Left lung (tissue), 14 donors: ENCODE measurements at regions of chr1 and their contacts with region 1.

Region 1: GRCh38 chr1:162035241-162035640 is 11.6 kb upstream of the OLFML2B start:
- DNase-seq: peak in 1 of 4 donors; percentile 40
- ATAC-seq: peak; percentile 14
- H3K4me3 ChIP-seq: no peak overlapping the region
- H3K27ac ChIP-seq: no peak overlapping the region
- H3K4me1 ChIP-seq: no peaks in the 10 kb centered on the region
- H3K27me3 ChIP-seq: peaks cover 0 to 9% of the 10 kb centered on the region in 2 donors
- CTCF ChIP-seq: no peak

Region 2: GRCh38 chr1:161792740-161793139 is 242.5 kb before region 1 on chr1:
- intact Hi-C with region 1: loop called in 1 of 2 experiments (anchors 5 kb)
- DNase-seq: peak in 2 of 4 donors; percentile 31 to 52
- ATAC-seq: peak; percentile 90
- H3K4me3 ChIP-seq: no peak overlapping the region
- H3K27ac ChIP-seq: no peak overlapping the region
- H3K4me1 ChIP-seq: no peaks in the 10 kb centered on the region
- H3K27me3 ChIP-seq: no peaks in the 10 kb centered on the region
- CTCF ChIP-seq: peak; percentile 42 to 44

Region 3: GRCh38 chr1:162168249-162168648 is 133.0 kb after region 1 on chr1:
- intact Hi-C with region 1: no loop called
- DNase-seq: peak in 1 of 4 donors; percentile 68
- ATAC-seq: peak; percentile 52
- H3K4me3 ChIP-seq: no peak overlapping the region
- H3K27ac ChIP-seq: no peak overlapping the region
- H3K4me1 ChIP-seq: no peaks in the 10 kb centered on the region
- H3K27me3 ChIP-seq: no peaks in the 10 kb centered on the region
- CTCF ChIP-seq: no peak